ENCODE measurements at regions of chr18 and their contacts with region 1.

Region 1: DNA sequence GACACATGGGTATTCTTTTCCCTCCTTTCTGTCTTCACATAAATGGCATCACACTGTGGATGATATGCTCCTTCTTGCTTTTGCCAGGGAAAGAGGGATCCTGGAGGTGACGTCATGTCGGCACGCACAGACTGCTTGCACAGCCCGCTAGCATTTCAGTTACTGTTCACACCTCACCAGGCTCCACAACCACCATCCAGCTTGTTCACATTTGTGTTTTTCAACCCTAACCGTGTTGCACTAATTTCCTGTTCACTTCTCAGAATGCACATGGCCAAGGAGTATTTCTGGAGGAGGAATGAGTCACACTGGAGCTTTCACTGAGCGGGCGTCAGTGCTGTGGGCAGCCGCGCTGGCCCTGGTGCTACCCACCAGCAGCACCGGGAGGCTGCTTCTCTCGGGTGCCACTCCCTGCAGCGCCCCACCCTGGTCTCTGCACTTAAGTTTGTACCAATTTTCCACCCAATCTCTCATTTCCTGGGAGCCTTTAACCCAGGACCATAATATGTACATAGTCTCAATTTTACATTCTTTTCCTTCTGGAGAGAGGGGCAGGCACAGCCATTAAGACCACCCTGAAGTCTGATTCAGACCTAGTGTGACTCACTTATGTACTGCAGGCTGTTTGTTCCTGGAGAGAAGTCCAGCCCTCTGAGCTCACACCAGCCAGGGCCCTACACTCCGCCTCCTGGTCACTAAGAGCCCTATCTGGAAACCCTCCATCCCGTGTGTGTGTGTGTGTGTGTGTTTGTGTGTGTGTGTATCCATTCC is 65.1 kb downstream of the MBP start:
- DNase-seq: peak; percentile 70 to 93 (median 87)
- H3K4me3 ChIP-seq: peak overlapping the region in 4 of 7 experiments; percentile 22 to 54 (median 42)
- H3K27ac ChIP-seq: peak overlapping the region; percentile 87 to 95
- H3K4me1 ChIP-seq: peaks cover 57 to 91% (median 74%) of the 10 kb centered on the region in 4 experiments
- H3K27me3 ChIP-seq: no peaks in the 10 kb centered on the region

Region 2: GRCh38 chr18:77000527-77000926 is 66.9 kb before region 1 on chr18:
- CTCF ChIA-PET with region 1: interaction called, 13 read pairs
- POLR2A ChIA-PET with region 1: interaction called, 3 read pairs
- DNase-seq: peak; percentile 44 to 61 (median 46)
- H3K4me3 ChIP-seq: no peak overlapping the region
- H3K27ac ChIP-seq: no peak overlapping the region
- H3K4me1 ChIP-seq: peaks cover 3 to 26% (median 16%) of the 10 kb centered on the region in 4 experiments
- H3K27me3 ChIP-seq: no peaks in the 10 kb centered on the region

Region 3: DNA sequence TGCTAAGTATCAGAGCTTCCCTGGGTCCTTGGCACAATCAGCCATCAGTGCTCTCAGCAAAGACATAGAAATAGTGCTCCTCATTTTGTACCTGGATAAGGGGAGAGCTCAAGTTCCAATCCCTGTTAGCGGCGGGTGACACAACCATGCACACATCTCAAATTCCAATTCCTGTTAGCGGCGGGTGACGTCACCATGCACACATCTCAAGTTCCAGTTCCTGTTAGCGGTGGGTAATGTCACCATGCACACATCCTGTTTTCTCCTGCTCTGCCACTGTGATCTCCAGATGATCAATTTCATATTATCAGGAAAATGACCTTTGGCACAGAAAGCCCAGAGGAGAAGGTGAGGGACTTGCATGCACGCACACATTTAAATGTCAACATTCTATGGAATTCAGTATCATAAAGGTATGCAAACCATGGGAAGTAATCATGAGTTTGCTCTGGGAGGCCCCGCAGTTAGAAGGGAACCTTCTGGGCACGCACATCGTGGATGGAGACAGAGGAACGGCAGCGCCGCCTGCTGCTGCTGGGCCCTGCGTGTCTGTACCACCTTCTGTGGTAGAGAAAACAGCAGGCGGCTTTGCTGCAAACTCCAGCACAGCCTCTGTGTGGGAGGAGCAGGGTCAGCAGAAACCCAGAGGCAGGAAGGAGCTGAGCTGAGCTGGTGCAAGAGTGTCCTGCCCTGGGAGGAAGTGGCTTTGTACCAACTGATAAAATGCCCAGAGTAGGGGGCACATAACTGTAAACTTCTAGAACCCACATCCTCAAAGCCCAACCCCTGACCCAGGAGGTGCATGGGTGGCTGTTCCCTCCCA is 12.7 kb before region 1 on chr18:
- CTCF ChIA-PET with region 1: interaction called, 90 read pairs
- POLR2A ChIA-PET with region 1: interaction called, 7 read pairs
- DNase-seq: peak; percentile 93 to 96 (median 96)
- H3K4me3 ChIP-seq: peak overlapping the region in 6 of 7 experiments; percentile 3 to 47 (median 25)
- H3K27ac ChIP-seq: peak overlapping the region; percentile 83 to 90
- H3K4me1 ChIP-seq: peaks cover 31 to 77% (median 69%) of the 10 kb centered on the region in 4 experiments
- H3K27me3 ChIP-seq: no peaks in the 10 kb centered on the region

Region 4: GRCh38 chr18:77087393-77088141 is 20.1 kb after region 1 on chr18:
- CTCF ChIA-PET with region 1: interaction called, 30 read pairs
- POLR2A ChIA-PET with region 1: no interaction called
- DNase-seq: no peak
- H3K4me3 ChIP-seq: no peak overlapping the region
- H3K27ac ChIP-seq: no peak overlapping the region
- H3K4me1 ChIP-seq: peaks cover 0 to 16% (median 11%) of the 10 kb centered on the region in 4 experiments
- H3K27me3 ChIP-seq: no peaks in the 10 kb centered on the region

Region 5: GRCh38 chr18:77108001-77108692 is 40.7 kb after region 1 on chr18:
- CTCF ChIA-PET with region 1: interaction called, 51 read pairs
- POLR2A ChIA-PET with region 1: interaction called, 4 read pairs
- DNase-seq: peak in 2 of 3 donors; percentile 79 to 85
- H3K4me3 ChIP-seq: peak overlapping the region in 3 of 7 experiments; percentile 29 to 59 (median 50)
- H3K27ac ChIP-seq: peak overlapping the region; percentile 12 to 28
- H3K4me1 ChIP-seq: peaks cover 32 to 100% (median 84%) of the 10 kb centered on the region in 4 experiments
- H3K27me3 ChIP-seq: no peaks in the 10 kb centered on the region

Region 6: DNA sequence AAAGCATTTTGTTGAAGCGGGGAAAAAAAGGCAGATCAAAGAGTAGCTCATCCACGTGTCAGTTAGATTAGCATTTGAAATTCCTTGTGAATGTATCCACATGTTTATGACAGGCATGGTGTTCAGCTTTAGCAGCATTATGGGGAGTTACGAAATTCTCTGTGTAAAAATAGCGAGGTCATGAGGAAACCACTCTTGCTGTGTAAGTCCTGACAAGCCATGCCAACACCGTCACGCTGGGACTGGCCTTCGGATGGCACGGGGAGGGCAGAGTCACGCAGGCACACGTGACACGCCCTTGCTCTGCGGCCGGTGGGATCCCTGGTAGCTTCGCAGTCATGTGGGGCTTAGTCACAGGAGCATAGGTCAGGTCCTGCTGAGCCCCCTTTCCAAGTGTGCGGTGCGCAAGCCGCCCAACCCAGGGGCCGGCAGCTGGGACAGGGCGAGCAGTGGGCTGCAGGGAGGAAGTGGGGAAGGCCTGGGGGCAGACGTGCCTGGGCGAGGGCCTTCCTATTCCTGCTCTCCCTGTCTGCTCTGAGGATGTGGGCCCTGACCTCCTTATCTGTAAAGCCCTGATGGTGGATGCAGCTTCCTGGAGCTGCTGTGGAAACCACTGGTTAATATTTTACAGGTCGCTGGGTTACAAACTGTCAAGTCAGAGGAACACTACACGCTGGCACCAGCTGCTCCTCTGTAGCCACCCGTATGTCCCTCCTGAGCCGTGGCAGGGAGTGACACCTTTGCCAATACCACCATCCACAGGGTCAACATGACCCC is 47.1 kb after region 1 on chr18:
- CTCF ChIA-PET with region 1: interaction called, 51 read pairs
- POLR2A ChIA-PET with region 1: interaction called, 11 read pairs
- DNase-seq: peak; percentile 98 to 100 (median 99)
- H3K4me3 ChIP-seq: peak overlapping the region in 4 of 7 experiments; percentile 33 to 43 (median 37)
- H3K27ac ChIP-seq: peak overlapping the region; percentile 86 to 92
- H3K4me1 ChIP-seq: peaks cover 23 to 96% (median 89%) of the 10 kb centered on the region in 4 experiments
- H3K27me3 ChIP-seq: no peaks in the 10 kb centered on the region

Region 7: DNA sequence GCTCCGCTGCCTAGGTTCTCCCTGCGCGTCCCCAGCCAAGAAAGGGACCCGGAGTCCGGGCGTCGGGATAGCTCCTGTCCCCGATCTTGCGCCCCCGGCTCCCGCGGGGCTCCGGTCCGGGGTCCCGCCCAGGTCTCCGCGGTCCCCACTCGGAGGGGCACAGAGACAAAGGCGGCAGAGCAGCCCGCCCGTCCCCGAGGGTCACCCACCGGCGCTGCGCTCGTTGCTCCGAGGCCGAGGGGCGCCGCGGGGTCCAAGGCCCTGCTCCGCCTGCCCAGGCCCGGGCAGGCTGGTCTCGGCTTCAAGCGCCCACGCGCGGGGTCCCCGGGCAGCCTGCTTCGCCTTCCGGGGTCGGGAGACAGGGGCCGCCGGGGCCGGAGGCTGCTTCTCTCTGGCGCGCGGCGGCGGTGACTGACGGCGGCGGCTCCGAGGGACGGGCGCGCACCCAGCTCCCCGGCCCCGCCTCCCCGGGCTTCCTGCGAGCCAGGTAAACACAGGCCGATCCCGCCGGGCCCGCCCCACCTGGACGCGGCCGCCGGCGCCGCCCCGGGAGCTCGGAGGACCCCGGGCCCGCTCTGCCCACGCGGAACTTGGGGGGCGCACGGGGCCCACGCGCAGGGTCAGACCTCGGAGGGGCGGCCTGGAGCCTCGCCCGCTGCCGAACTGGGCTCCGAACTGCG is 65.0 kb after region 1 on chr18 and contains the start of gene MBP:
- CTCF ChIA-PET with region 1: interaction called, 15 read pairs
- POLR2A ChIA-PET with region 1: interaction called, 5 read pairs
- DNase-seq: peak in 1 of 3 donors; percentile 60
- H3K4me3 ChIP-seq: peak within 1 kb of the TSS; percentile 62 to 86 (median 78)
- H3K27ac ChIP-seq: peak within 1 kb of the TSS; percentile 72 to 87
- H3K4me1 ChIP-seq: peaks cover 22 to 73% (median 61%) of the 10 kb centered on the region in 4 experiments
- H3K27me3 ChIP-seq: no peaks in the 10 kb centered on the region

Measured in common myeloid progenitor, CD34-positive (primary cell).